ENCODE measurements at regions of chr6 and their contacts with region 1.

Region 1: DNA sequence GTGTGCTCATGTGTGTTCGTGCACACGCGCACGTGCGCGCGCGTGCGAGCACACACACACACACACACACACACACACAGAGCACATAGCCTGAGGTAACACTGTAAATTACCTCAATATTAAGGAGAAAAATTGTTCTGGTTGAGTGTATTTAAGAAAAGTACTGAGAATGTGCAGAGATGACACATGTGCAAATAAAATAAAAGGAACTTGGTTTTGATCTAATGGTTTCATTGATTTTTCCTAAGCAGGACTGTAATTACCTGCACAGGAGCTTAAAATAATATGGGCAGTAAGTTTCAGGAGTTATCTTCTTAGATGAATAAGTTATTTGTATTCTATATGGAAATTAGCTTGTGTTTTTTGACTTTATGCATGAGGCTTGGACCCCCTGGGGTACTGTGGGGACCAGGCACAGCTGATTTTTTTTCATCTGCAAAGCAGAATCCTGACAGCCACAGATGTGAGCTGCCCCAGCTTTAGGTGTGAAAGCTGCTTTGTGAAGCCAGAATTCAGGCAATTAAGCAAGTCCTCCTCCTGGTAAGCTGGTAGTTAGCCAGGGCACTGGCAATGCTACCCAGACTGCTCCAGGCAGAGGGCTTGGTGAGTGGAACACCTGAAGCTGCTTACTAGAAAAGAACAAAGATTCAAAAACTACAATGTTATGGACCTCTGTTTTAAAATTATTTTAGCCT is 1040.7 kb upstream of the CITED2 start:
- DNase-seq: no peak
- ATAC-seq: no peak
- H3K4me3 ChIP-seq: no peak overlapping the region
- H3K27ac ChIP-seq: no peak overlapping the region
- H3K4me1 ChIP-seq: no peaks in the 10 kb centered on the region
- H3K27me3 ChIP-seq: no peaks in the 10 kb centered on the region
- CTCF ChIP-seq: no peak

Region 2: GRCh38 chr6:140156131-140156530 is 259.0 kb before region 1 on chr6:
- intact Hi-C with region 1: no loop called
- DNase-seq: no peak
- ATAC-seq: no peak
- H3K4me3 ChIP-seq: no peak overlapping the region
- H3K27ac ChIP-seq: no peak overlapping the region
- H3K4me1 ChIP-seq: no peaks in the 10 kb centered on the region
- H3K27me3 ChIP-seq: no peaks in the 10 kb centered on the region
- CTCF ChIP-seq: no peak

Region 3: GRCh38 chr6:140303218-140303949 is 111.7 kb before region 1 on chr6:
- intact Hi-C with region 1: no loop called
- DNase-seq: no peak
- ATAC-seq: no peak
- H3K4me3 ChIP-seq: no peak overlapping the region
- H3K27ac ChIP-seq: no peak overlapping the region
- H3K4me1 ChIP-seq: no peaks in the 10 kb centered on the region
- H3K27me3 ChIP-seq: no peaks in the 10 kb centered on the region
- CTCF ChIP-seq: no peak

Region 4: DNA sequence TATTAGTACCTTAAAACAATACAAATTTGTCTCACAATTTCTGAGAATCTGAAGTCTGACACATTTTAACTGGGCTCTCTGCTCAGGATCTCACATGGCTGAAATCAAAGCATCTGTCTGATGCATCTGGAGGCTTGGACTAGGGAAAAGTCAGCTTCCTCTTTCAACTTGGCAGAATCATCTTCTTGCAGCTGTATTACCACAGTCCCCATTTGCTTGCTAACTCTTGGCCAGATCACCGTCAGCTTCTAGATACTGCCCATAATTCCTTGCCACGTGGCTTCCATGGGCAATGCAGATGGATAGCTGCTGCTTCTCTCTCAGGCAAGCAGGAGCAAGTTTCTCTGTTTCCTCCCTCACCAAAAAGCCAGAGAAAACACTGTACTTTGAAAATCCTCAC is 65.7 kb after region 1 on chr6:
- intact Hi-C with region 1: loop called in 1 of 2 experiments (anchors 2 kb)
- DNase-seq: peak; percentile 13 to 55
- ATAC-seq: peak; percentile 46 to 61 (median 52)
- H3K4me3 ChIP-seq: no peak overlapping the region
- H3K27ac ChIP-seq: no peak overlapping the region
- H3K4me1 ChIP-seq: no peaks in the 10 kb centered on the region
- H3K27me3 ChIP-seq: no peaks in the 10 kb centered on the region
- CTCF ChIP-seq: no peak

Measured in psoas muscle (tissue), 8 donors.